ENCODE measurements at regions of chr4 and their contacts with region 1.

Region 1: DNA sequence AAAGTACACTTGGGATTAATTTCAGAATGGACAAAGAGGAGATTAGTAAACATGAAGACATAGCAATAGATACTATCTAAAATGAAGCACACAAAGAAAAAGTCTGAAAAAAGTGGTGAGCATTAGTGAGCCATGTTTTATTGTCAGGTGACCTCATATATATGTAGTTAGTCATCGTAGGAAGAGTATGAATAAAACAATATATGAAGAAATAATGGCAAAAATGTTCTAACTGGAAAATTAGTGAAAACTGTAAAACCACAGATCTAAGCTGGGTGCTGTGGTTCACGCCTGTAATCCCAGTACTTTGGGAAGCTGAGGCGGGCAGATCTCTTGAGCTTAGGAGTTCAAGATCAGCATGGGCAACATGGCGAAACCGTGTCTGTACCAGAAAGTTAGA is 67.9 kb downstream of the RBPJ start:
- DNase-seq: no peak
- H3K4me3 Mint-ChIP-seq: no peak overlapping the region
- H3K27ac Mint-ChIP-seq: peak overlapping the region; percentile 42
- H3K4me1 Mint-ChIP-seq: peaks cover 34% of the 10 kb centered on the region
- H3K27me3 Mint-ChIP-seq: no peaks in the 10 kb centered on the region

Region 2: DNA sequence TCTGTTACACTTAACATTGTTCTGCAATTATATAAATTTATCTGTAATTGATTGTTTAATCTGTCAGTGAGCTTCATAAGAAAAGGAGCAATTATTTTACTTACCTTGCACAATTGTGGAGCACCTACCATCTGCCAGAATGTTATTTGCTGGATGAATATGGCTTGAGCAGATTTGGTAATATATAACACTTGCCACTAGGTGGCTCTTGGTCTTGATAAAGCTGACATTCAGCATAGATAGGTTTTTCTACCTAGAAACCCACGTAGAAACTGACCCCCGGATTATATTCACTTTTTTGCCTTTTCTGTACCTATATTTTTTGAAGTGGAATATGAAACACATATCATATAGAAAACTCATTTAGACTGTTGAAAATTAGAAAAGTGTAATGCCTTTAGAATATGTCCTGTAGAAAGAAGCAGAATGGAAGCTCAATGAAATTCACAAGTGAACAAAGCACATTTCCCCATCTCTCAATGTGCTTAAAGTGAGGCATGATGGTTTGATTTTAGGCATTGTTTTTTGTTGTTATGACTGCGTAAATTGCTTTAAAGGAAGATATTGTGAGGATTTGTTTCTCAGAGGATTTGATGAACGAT is 58.4 kb before region 1 on chr4:
- intact Hi-C with region 1: no loop called
- DNase-seq: no peak
- H3K4me3 Mint-ChIP-seq: no peak overlapping the region
- H3K27ac Mint-ChIP-seq: no peak overlapping the region
- H3K4me1 Mint-ChIP-seq: peaks cover 45% of the 10 kb centered on the region
- H3K27me3 Mint-ChIP-seq: no peaks in the 10 kb centered on the region

Region 3: DNA sequence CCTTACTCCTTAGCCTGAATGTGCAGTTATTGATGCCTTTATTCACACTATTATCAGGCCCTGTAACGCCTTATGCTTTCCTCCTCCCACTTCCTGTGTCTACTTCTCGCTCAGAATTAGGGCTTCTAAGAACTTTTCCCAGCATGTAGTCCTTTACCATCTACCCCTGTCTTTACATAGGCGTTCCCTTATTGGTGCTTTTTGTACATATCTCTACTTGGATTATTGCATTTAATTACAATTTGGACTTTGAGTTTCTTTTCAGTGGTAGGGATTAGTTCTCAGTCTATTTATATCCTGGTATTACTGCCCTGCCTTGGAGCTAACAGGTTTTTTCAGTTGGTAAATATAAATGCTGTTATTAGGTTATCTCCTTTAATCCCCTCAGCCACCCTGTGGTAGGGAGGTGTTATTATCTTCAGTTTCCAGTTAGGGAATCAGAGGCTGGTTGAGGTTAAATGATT is 16.1 kb after region 1 on chr4:
- intact Hi-C with region 1: loop called (anchors 2 kb)
- DNase-seq: no peak
- H3K4me3 Mint-ChIP-seq: no peak overlapping the region
- H3K27ac Mint-ChIP-seq: no peak overlapping the region
- H3K4me1 Mint-ChIP-seq: peaks cover 48% of the 10 kb centered on the region
- H3K27me3 Mint-ChIP-seq: no peaks in the 10 kb centered on the region

Measured in activated T-helper 1 cell treated with anti-CD3 and anti-CD28 coated beads, Interleukin-12 subunit alpha, Interleukin-12 subunit beta, Interleukin-2, Interleukin-4 antibody, amounts not matched to agents 30 ng/mL and 10 ng/mL and 1 ng/mL, durations not matched to agents 14 hours and 24 hours and 36 hours (primary cell).